ENCODE measurements at regions of chr1 and their contacts with region 1.

Region 1: DNA sequence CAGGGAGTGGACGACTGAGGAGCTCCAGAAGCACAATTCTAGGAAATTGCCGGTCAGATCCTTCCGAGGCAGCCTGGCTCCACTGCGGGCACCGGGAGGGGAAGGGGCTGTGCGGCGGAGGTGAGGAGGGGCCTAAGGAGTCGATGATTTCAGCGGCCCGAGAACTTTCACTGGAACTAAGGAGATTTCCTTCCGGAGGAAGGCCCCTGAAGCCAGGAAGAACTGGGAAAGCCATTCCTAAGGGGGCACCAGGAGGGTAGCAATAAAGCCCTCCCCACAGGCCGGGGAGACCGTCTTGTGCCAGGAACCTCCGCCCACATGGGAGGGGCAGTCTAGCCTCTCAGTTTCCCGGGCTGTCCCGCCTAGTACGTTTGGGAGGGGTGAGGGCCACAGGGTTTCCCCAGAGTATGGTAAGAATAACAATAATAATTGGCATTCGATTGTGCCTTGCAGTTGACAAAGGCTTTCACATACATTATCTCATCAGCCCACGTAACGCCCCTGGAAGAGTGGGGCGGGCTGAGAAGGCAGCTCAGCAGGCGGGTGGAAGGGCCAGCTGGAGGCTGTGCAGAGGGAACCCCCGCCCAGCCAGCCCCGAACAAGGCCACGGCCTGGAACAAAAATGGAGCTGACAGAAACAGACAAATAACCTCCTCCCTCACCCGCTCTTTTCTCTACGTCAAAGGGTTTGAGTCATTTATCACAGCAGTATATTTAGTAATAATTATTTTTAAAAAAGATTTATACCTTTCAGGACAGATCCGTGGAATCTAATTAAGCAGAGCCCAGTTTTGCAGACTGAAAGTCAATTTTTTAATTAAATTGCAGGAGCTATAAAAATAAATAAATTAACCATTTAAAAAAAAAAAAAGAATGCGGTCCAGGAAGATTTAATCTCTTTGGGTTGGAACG is 19.8 kb downstream of the NPR1 start:
- DNase-seq: peak; percentile 50 to 77 (median 64)
- ATAC-seq: peak; percentile 88
- H3K4me3 ChIP-seq: no peak overlapping the region
- H3K27ac ChIP-seq: peak overlapping the region; percentile 87
- H3K4me1 ChIP-seq: peaks cover 19 to 28% of the 10 kb centered on the region in 2 experiments
- H3K27me3 ChIP-seq: no peaks in the 10 kb centered on the region
- CTCF ChIP-seq: no peak
- EP300 ChIP-seq: no peak
- POLR2A ChIP-seq: no peak; the same call in 1 of the 2 replicates
- RAD21 ChIP-seq: no peak

Region 2: GRCh38 chr1:153727463-153728304 is 29.4 kb after region 1 on chr1 and contains the start of gene INTS3:
- CTCF ChIA-PET with region 1: no interaction called
- POLR2A ChIA-PET with region 1: interaction called, 12 read pairs
- in situ Hi-C with region 1: no loop called
- intact Hi-C with region 1: no loop called
- DNase-seq: peak; percentile 100
- ATAC-seq: peak; percentile 100
- H3K4me3 ChIP-seq: peak within 1 kb of the TSS; percentile 84
- H3K27ac ChIP-seq: peak within 1 kb of the TSS; percentile 94
- H3K4me1 ChIP-seq: peaks cover 7 to 11% of the 10 kb centered on the region in 2 experiments; a peak in 4 of 5 replicates
- H3K27me3 ChIP-seq: no peaks in the 10 kb centered on the region
- CTCF ChIP-seq: peak; percentile 13 to 44 (median 32); a peak in 4 of 6 replicates
- EP300 ChIP-seq: no peak
- POLR2A ChIP-seq: peak; percentile 78
- RAD21 ChIP-seq: no peak
- polyA plus RNA-seq, gene INTS3: 6.3 to 7.8 TPM

Region 3: DNA sequence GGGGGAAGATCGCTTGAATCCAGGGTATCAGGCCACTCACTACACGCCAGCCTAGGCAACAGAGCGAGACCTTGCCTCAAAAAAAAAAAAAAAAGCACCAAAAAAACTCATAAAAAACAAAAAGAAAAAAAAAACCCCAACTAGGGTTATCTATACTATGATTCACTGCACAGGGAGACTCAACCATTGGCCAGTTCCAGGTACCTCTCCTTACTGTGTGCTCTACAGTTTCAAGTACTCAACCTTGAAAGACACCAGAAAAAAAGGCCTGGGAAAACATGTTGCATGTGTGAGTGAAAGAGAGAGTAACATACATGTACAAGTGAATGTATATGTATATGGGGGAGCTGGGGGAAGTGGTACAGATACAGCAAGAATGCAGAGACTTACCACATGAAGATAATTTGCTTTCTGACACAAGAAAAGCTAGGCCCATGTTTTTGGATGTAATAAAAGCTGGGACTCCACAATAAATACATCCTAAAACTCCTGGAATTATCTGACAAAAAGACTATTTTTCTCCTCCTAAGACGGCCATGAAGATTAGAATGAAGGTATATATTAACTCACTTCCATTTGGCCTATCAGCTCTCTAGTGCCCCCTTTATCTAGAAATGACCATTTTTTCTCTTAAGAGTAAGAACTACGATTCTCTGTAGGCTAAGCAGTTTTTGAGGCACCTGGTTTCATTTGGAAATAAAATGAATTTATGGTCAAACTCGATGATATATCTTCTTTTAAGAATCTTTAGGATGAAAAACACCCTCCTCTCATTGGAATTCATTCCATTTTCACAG is 129.1 kb after region 1 on chr1:
- CTCF ChIA-PET with region 1: no interaction called
- POLR2A ChIA-PET with region 1: no interaction called
- in situ Hi-C with region 1: no loop called
- intact Hi-C with region 1: no loop called
- DNase-seq: no peak
- ATAC-seq: no peak
- H3K4me3 ChIP-seq: no peak overlapping the region
- H3K27ac ChIP-seq: no peak overlapping the region
- H3K4me1 ChIP-seq: no peaks in the 10 kb centered on the region; a peak in 1 of 5 replicates
- H3K27me3 ChIP-seq: no peaks in the 10 kb centered on the region
- CTCF ChIP-seq: peak in 1 of 3 experiments; percentile 17; a peak in 1 of 6 replicates
- EP300 ChIP-seq: no peak
- POLR2A ChIP-seq: no peak
- RAD21 ChIP-seq: no peak